CD8-positive, alpha-beta T cell (primary cell): ENCODE measurements at regions of chr10 and their contacts with region 1.

Region 1: DNA sequence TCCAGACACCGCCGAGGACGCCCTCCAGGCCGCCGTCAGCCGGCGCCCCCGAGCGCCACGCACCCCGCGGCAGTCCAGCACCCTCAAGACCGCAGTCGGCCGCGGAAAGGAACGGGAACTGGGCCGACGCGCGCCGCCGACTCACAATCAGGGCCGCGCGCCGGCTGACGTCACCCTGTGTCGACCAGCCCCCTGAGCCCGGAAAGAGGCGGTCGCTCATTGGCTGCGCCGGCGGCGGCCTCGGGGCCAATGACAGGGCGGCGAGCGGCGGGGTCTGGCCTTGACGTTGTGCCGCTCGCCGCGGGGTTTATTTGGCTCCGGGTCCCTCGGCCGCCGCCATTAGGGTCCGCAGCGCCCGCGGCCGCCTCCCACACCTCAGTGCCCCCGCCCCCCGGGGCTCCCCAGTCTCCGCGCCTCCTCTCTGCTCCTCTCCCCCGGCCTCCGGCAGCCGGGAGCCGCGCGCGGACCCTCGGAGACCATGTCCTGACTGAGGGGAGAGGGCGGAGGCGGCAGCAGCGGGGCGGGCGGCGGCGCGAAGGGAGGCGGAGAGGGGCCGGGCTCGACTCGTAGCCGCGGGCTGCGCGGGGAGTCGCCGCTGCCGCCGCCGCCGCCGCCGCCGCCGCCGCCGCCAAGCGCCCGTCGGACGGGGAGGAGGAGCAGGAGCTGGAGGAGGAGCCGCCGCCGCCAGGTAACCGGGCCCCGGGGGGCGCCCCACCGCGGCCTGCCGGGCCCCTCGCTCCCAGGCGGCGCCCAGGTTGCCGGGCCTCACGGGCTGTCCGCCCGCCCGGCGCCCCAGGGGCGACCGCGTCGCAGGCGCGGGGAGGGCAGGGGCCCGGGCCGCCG is 25.1 kb upstream of the ZRANB1 start:
- DNase-seq: peak; percentile 92 to 98 (median 97)
- ATAC-seq: peak; percentile 87
- H3K4me3 ChIP-seq: peak overlapping the region; percentile 82 to 92
- H3K4me3 Mint-ChIP-seq: peak overlapping the region; percentile 88
- H3K27ac ChIP-seq: peak overlapping the region; percentile 95 to 99
- H3K27ac Mint-ChIP-seq: peak overlapping the region; percentile 96
- H3K4me1 ChIP-seq: peaks cover 26% of the 10 kb centered on the region
- H3K4me1 Mint-ChIP-seq: peaks cover 40% of the 10 kb centered on the region
- H3K27me3 ChIP-seq: no peaks in the 10 kb centered on the region
- H3K27me3 Mint-ChIP-seq: peaks cover 2% of the 10 kb centered on the region
- CTCF ChIP-seq: no peak

Region 2: DNA sequence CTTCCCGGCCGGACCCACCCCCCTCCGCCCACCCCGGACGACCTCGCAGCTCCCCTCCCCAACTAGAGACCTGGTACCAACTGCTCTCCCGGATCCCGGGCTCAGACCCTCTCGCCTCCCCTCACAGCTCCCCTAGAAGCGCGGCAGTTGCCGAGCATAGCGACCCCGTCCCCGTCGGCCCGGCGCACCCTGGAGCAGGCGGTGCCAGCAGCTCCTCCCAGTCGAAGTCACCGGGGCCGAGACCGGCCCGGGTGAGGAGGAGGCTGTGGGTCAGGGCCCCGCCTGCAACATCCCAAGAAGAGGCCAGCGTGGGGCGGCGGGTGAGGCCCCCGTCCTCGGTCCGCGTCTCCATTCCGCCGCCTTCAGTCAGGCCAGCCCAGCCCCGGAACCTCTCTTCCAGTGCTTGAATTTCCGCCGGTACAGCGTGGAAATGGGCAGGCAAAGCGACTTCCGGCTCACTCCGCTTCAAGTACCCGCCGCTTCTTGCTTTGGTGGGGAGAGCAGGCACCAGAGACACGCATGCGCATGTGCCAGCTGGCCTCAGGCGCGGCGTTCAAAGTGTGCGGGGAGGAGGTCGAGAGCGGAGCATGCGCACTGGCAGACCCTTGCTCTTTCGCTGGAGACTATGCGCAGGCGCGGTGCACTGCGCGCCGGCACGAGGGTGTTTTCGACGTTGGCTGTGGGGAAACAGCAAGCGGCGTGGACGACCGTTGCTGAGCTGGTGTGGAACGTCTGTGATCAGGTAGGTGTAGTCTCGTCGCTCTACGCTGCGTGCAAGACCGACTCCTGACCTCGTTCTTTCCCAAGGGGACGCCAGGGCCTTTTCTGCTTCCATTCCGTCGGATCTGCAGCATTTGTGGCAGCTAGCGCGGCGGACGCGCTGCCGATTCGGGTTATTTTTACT is 1962.7 kb before region 1 on chr10 and contains the start of gene C10orf88:
- CTCF ChIA-PET with region 1: no interaction called
- POLR2A ChIA-PET with region 1: no interaction called
- intact Hi-C with region 1: loop called in 1 of 2 experiments (anchors 10 kb)
- DNase-seq: peak; percentile 95 to 100 (median 97)
- ATAC-seq: peak; percentile 91
- H3K4me3 ChIP-seq: peak within 1 kb of the TSS; percentile 67 to 82
- H3K4me3 Mint-ChIP-seq: peak within 1 kb of the TSS; percentile 86
- H3K27ac ChIP-seq: peak within 1 kb of the TSS; percentile 36 to 72
- H3K27ac Mint-ChIP-seq: peak within 1 kb of the TSS; percentile 86
- H3K4me1 ChIP-seq: peaks cover 21% of the 10 kb centered on the region
- H3K4me1 Mint-ChIP-seq: peaks cover 46% of the 10 kb centered on the region
- H3K27me3 ChIP-seq: no peaks in the 10 kb centered on the region
- H3K27me3 Mint-ChIP-seq: no peaks in the 10 kb centered on the region
- CTCF ChIP-seq: no peak
- total RNA-seq, gene C10orf88: 2.2 to 2.8 TPM

Region 3: GRCh38 chr10:124418726-124419501 is 497.9 kb before region 1 on chr10 and contains the start of gene OAT:
- CTCF ChIA-PET with region 1: no interaction called
- POLR2A ChIA-PET with region 1: no interaction called
- intact Hi-C with region 1: loop called (anchors 2 to 5 kb)
- DNase-seq: peak; percentile 93 to 98 (median 97)
- ATAC-seq: peak; percentile 98
- H3K4me3 ChIP-seq: peak within 1 kb of the TSS; percentile 66 to 68
- H3K4me3 Mint-ChIP-seq: peak within 1 kb of the TSS; percentile 85
- H3K27ac ChIP-seq: peak within 1 kb of the TSS; percentile 70
- H3K27ac Mint-ChIP-seq: peak within 1 kb of the TSS; percentile 83
- H3K4me1 ChIP-seq: peaks cover 14% of the 10 kb centered on the region
- H3K4me1 Mint-ChIP-seq: peaks cover 25% of the 10 kb centered on the region
- H3K27me3 ChIP-seq: no peaks in the 10 kb centered on the region
- H3K27me3 Mint-ChIP-seq: peaks cover 7% of the 10 kb centered on the region
- CTCF ChIP-seq: no peak
- total RNA-seq, gene OAT: 49.8 to 56.1 TPM

Region 4: GRCh38 chr10:124530215-124530665 is 386.6 kb before region 1 on chr10:
- CTCF ChIA-PET with region 1: no interaction called
- POLR2A ChIA-PET with region 1: no interaction called
- intact Hi-C with region 1: loop called (anchors 2 to 5 kb)
- DNase-seq: peak; percentile 76 to 92 (median 85)
- ATAC-seq: peak; percentile 97
- H3K4me3 ChIP-seq: no peak overlapping the region
- H3K4me3 Mint-ChIP-seq: peak overlapping the region; percentile 40
- H3K27ac ChIP-seq: no peak overlapping the region
- H3K27ac Mint-ChIP-seq: no peak overlapping the region
- H3K4me1 ChIP-seq: no peaks in the 10 kb centered on the region
- H3K4me1 Mint-ChIP-seq: peaks cover 14% of the 10 kb centered on the region
- H3K27me3 ChIP-seq: no peaks in the 10 kb centered on the region
- H3K27me3 Mint-ChIP-seq: no peaks in the 10 kb centered on the region
- CTCF ChIP-seq: peak; percentile 66

Region 5: GRCh38 chr10:124802313-124802675 is 114.5 kb before region 1 on chr10:
- CTCF ChIA-PET with region 1: no interaction called
- POLR2A ChIA-PET with region 1: interaction called, 10 read pairs
- intact Hi-C with region 1: loop called (anchors 1 to 2 kb)
- DNase-seq: peak in 3 of 9 experiments; percentile 5 to 38 (median 19)
- ATAC-seq: no peak
- H3K4me3 ChIP-seq: peak overlapping the region; percentile 73 to 90
- H3K4me3 Mint-ChIP-seq: peak overlapping the region; percentile 94
- H3K27ac ChIP-seq: peak overlapping the region; percentile 36 to 76
- H3K27ac Mint-ChIP-seq: peak overlapping the region; percentile 91
- H3K4me1 ChIP-seq: peaks cover 12% of the 10 kb centered on the region
- H3K4me1 Mint-ChIP-seq: peaks cover 25% of the 10 kb centered on the region
- H3K27me3 ChIP-seq: no peaks in the 10 kb centered on the region
- H3K27me3 Mint-ChIP-seq: peaks cover 2% of the 10 kb centered on the region
- CTCF ChIP-seq: no peak

Region 6: GRCh38 chr10:125719146-125720001 is 802.6 kb after region 1 on chr10 and contains the start of gene EDRF1:
- CTCF ChIA-PET with region 1: no interaction called
- POLR2A ChIA-PET with region 1: interaction called, 3 read pairs
- intact Hi-C with region 1: loop called (anchors 2 kb)
- DNase-seq: peak; percentile 98 to 100 (median 99)
- ATAC-seq: peak; percentile 94
- H3K4me3 ChIP-seq: peak within 1 kb of the TSS; percentile 78 to 93
- H3K4me3 Mint-ChIP-seq: peak within 1 kb of the TSS; percentile 99
- H3K27ac ChIP-seq: peak within 1 kb of the TSS; percentile 91 to 94
- H3K27ac Mint-ChIP-seq: peak within 1 kb of the TSS; percentile 99
- H3K4me1 ChIP-seq: peaks cover 39% of the 10 kb centered on the region
- H3K4me1 Mint-ChIP-seq: peaks cover 36% of the 10 kb centered on the region
- H3K27me3 ChIP-seq: no peaks in the 10 kb centered on the region
- H3K27me3 Mint-ChIP-seq: no peaks in the 10 kb centered on the region
- CTCF ChIP-seq: no peak
- total RNA-seq, gene EDRF1: 46.9 to 49.0 TPM